A549 (cell line): ENCODE measurements at regions of chrX and their contacts with region 1.

Region 1: DNA sequence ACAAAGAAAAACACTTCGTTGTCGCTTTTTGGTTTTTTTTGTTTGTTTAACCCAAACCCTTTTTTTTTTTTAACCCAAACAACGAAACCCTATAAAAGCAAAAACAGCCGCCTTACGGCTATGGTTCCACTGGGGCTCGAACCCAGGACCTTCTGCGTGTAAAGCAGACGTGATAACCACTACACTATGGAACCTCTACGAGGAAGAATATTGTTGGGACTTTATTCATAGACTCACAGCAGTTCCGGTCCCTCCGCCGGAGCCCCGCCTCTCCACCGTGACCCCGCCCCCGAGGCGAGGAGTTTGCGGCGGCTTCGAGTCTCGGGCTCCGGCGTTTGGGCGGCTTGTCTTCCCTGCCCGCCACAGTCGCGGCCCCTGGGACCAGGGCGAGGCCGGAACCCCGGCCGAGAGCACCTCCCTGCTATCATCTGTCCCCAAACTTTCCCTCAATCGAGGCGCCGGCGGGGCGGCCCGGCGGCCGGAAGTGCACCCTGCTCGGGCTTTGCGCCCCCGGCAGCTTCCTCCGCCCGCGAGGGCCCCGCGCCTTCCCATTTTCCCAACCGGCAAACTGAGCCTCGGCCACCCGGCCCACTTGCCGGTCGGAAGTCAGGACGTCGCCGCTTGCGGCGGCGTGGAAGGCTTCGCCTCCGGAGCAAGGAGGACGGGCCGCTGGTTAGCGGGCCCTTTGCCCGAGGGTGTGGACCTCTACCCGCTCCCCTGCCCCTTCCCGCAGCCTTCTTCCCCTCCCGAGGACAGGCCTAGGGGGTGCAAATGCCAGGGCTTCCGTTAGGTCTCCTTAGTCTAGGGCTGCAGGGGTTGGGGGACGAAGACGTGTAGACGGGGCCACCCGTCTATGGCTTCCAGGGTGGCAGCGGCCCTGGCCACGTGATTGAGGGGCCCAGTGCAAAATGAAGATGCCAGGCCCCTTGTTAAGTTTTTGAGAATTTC is 3.2 kb upstream of the RS1 start:
- DNase-seq: peak; percentile 62 to 77
- ATAC-seq: peak; percentile 91 to 92
- H3K4me3 ChIP-seq: peak overlapping the region; percentile 73
- H3K27ac ChIP-seq: peak overlapping the region; percentile 96 to 97
- H3K4me1 ChIP-seq: peaks cover 13% of the 10 kb centered on the region; the same call in 2 of the 3 replicates
- CTCF ChIP-seq: no peak
- EP300 ChIP-seq: no peak
- POLR2A ChIP-seq: peak; percentile 23; the same call in 1 of the 2 replicates
- RAD21 ChIP-seq: peak in 1 of 2 experiments; percentile 25; a peak in 1 of 5 replicates

Region 2: DNA sequence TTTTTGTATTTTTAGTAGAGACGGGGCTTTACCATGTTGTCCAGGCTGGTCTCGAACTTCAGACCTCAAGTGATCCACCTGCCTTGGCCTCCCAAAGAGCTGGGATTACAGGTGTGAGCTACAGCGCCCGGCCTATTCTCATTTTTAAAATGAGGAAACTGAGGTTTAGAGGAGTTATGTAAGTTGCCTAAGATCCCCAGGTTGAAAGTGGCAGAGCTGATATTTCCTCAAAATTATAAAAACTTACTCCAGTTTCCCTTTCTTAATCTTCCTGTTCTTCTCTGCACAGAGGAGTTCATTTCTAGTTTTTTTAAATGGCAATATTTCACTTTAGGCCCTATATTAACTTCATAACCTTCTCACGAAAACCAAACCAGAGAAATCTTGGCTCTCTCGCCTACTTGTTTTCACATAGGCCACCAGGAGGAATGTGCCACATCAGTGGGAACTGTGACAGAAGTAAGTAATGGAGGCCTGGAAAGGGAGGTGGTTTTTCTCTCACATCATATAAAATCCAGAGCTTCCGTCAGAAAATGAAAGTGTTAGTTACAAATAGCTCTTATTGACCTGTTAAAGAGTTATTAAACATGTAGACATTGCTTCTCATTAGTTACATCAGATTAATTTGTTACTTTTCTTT is 12.9 kb after region 1 on chrX:
- CTCF ChIA-PET with region 1: interaction called, 23 read pairs
- POLR2A ChIA-PET with region 1: no interaction called
- DNase-seq: no peak
- ATAC-seq: no peak
- H3K4me3 ChIP-seq: no peak overlapping the region
- H3K27ac ChIP-seq: no peak overlapping the region
- H3K4me1 ChIP-seq: peaks cover 13% of the 10 kb centered on the region; the same call in 2 of the 3 replicates
- CTCF ChIP-seq: no peak
- EP300 ChIP-seq: no peak
- POLR2A ChIP-seq: no peak
- RAD21 ChIP-seq: no peak

Region 3: DNA sequence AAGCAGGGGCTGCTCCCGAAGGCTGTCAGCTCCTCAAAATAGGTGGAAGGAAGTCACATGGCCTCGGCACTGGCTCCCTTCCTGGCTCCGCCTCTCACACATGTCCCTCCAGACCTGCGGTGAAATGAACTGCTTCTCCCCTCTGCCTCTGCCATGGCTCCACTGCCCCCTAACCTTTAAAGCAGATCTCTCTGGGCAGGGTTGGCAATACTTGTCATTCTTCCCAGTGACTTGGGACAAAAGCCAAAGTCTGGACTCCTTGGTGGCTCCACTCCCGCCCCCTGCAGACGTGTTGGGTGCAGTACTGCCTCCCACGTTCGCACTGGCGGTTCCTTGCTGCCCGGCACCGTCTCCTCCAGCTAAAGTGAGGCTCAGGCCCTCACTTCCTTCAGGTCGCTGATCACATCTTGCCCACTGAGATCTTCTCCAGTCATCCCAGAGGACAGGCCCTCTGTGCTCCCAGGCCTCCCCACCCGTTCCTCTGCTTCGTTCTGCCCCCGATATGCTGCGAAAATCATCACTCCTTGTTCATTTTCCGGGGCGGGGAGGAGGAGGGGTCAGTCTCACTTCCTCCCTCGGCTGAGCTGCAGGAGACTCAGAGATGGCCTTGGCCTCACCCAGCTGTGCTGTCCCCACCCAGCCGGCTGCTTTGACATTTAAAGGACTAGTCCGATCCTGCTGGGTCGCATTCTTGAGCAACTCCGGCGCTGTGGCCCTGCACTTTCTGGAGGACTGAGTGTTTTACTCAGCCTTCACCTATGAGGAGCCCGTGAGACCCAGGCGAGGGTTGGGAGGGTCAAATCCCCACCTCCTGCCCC is 211.5 kb after region 1 on chrX:
- CTCF ChIA-PET with region 1: interaction called, 12 read pairs
- POLR2A ChIA-PET with region 1: interaction called, 7 read pairs
- DNase-seq: peak; percentile 52 to 84
- ATAC-seq: peak; percentile 88
- H3K4me3 ChIP-seq: peak overlapping the region; percentile 35
- H3K27ac ChIP-seq: peak overlapping the region; percentile 82 to 91
- H3K4me1 ChIP-seq: peaks cover 30% of the 10 kb centered on the region
- CTCF ChIP-seq: peak; percentile 59; the same call in 2 of the 3 replicates
- EP300 ChIP-seq: no peak
- POLR2A ChIP-seq: peak; percentile 27
- RAD21 ChIP-seq: peak; percentile 62 to 72